Astrocyte of the cerebellum (primary cell): ENCODE measurements at regions of chr11 and their contacts with region 1.

Region 1: GRCh38 chr11:73566977-73567755 is 30.7 kb downstream of the FAM168A start:
- DNase-seq: no peak
- H3K4me3 ChIP-seq: no peak overlapping the region
- CTCF ChIP-seq: no peak

Region 2: DNA sequence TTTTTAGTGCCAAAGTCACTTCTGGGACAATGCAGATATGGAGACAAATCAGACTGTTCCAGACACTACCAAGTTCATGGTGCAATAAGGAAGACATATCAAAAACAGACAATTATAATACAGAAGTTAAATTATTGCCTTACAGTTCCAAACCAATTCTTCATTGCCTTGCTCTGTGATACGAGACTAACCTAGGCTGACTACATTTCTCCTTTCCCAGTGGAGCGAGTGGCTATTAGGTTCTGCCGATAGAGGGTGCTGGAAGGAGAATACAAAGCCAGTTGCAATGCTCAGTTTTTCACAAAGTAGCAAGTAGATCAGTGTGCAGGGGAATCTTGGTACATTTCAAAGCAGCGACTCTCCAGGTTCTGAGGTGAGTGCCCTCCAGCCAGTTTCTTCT is 37.1 kb before region 1 on chr11:
- in situ Hi-C with region 1: loop called (anchors 5 kb)
- DNase-seq: no peak
- H3K4me3 ChIP-seq: no peak overlapping the region
- CTCF ChIP-seq: peak; percentile 17

Region 3: GRCh38 chr11:73633999-73634398 is 66.8 kb after region 1 on chr11:
- in situ Hi-C with region 1: no loop called
- DNase-seq: no peak
- H3K4me3 ChIP-seq: no peak overlapping the region
- CTCF ChIP-seq: no peak